Activated CD4-positive, alpha-beta memory T cell treated with anti-CD3 and anti-CD28 coated beads, Interleukin-2, amount 10 ng/mL, durations not matched to agents 7 days and 5 days (primary cell): ENCODE measurements at regions of chr4 and their contacts with region 1.

Region 1: GRCh38 chr4:152500800-152501434 is 35.0 kb downstream of the FBXW7 start:
- DNase-seq: peak; percentile 51
- H3K4me3 Mint-ChIP-seq: no peak overlapping the region
- H3K27ac Mint-ChIP-seq: no peak overlapping the region
- H3K4me1 Mint-ChIP-seq: peaks cover 25% of the 10 kb centered on the region
- H3K27me3 Mint-ChIP-seq: no peaks in the 10 kb centered on the region

Region 2: DNA sequence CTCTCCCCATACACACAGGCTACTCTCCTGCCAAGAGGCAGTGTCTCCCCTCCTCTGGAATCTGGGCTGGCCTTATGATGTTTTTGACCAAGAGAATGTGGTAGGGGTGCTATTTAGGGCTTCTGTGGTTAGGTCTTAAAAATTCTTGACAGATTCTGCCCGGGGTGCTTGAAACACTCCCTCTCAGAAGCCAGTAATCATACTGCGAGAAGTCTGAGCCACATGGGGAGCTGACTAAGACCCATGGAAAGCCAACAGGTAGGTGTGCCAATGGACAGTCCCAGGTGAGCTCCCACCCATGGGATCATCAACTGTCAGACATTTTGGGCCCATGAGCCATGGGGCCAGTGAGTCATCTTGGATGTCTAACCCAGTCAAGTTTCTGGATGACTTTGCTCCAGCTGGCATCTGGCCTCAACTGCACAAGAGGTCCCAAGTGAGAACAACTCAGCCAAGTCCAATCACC is 280.7 kb before region 1 on chr4:
- CTCF ChIA-PET with region 1: no interaction called
- POLR2A ChIA-PET with region 1: no interaction called
- DNase-seq: no peak
- H3K4me3 Mint-ChIP-seq: no peak overlapping the region
- H3K27ac Mint-ChIP-seq: no peak overlapping the region
- H3K4me1 Mint-ChIP-seq: peaks cover 19% of the 10 kb centered on the region
- H3K27me3 Mint-ChIP-seq: no peaks in the 10 kb centered on the region

Region 3: DNA sequence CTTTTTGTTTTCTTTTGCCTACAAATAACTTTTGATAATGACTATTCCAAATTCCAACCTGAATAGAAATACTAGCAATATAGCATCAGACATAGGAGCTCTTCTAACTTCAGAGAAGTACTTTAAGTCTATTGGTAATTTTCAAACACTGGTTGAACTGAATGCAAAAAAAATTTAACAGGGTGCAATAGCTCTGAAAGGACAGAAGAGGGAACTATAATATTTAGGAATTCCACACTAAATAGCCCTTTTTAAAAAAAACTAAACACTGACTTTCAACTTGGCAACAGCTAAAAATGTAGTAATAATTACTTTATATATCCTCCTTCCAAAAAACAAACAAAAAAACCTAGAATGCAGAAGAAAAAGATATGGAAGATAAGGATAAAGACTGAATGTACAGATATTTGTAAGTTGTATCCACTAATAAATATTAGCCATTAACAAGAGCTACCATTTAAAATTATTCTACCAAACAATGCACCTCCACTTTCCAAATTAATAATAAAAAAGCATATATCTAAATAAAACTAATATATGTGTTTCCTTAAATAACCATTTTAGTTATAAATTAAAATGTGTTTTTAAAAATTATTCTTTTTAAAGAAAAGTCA is 46.4 kb before region 1 on chr4:
- CTCF ChIA-PET with region 1: interaction called, 10 read pairs
- POLR2A ChIA-PET with region 1: no interaction called
- DNase-seq: no peak
- H3K4me3 Mint-ChIP-seq: no peak overlapping the region
- H3K27ac Mint-ChIP-seq: no peak overlapping the region
- H3K4me1 Mint-ChIP-seq: peaks cover 27% of the 10 kb centered on the region
- H3K27me3 Mint-ChIP-seq: no peaks in the 10 kb centered on the region

Region 4: GRCh38 chr4:152485726-152486276 is 15.1 kb before region 1 on chr4:
- CTCF ChIA-PET with region 1: interaction called, 11 read pairs
- POLR2A ChIA-PET with region 1: interaction called, 3 read pairs
- DNase-seq: peak; percentile 41
- H3K4me3 Mint-ChIP-seq: peak overlapping the region; percentile 18
- H3K27ac Mint-ChIP-seq: peak overlapping the region; percentile 81
- H3K4me1 Mint-ChIP-seq: peaks cover 41% of the 10 kb centered on the region
- H3K27me3 Mint-ChIP-seq: no peaks in the 10 kb centered on the region

Region 5: DNA sequence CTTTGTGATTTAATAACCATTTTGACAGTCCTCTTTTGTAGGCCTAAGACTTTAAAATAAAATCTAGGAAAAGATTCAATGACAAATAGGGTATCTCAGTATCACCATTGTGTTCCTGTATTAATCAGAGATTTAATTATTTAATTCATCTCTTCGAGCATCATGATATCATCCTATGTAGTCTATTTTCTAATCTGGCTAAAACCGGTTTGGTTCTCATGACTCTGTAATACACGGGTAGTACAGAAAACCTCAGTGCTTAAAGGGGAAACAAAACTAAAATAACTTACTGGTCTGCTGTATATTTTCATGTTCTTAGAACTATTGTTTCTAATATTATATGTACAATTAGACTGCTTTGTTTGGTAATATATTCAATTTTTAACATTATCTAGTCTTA is 58.7 kb after region 1 on chr4:
- CTCF ChIA-PET with region 1: interaction called, 15 read pairs
- POLR2A ChIA-PET with region 1: no interaction called
- DNase-seq: no peak
- H3K4me3 Mint-ChIP-seq: no peak overlapping the region
- H3K27ac Mint-ChIP-seq: no peak overlapping the region
- H3K4me1 Mint-ChIP-seq: peaks cover 30% of the 10 kb centered on the region
- H3K27me3 Mint-ChIP-seq: peaks cover 1% of the 10 kb centered on the region

Region 6: DNA sequence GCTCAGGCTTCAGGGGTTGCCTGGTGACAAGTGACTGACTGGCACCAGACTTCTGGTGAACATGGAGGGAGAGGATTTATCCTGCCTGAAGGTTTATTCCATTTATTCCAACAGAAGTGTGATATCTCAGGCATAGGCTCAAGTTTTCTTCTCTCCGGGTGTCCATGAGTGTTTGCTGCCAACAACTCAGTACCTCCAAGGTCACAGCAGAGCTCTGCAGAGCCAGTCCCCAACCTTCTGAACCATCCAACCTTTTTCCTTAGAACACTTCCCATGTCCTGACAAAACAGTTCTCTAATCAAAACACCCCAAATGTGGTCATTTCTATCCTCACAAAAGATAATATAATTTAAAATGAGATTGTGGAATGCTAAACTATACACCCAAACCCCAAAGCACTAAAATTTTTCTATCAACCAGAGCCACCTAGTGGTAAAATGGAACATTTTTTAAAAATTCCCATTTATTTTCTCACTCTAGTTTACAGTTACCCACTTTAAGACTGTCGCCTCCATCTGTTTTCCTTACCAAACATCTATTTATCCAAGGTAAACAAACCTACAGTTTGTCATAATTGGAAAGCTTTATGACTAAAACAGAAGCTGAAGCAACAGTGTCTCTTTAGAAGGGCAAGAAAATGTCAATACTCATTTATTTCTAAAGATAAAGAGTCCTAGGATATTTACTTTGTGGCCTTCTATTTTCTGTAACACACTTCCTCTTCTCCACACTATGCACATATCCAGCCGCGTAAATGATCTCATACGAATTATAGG is 139.3 kb after region 1 on chr4:
- CTCF ChIA-PET with region 1: interaction called, 155 read pairs
- POLR2A ChIA-PET with region 1: interaction called, 3 read pairs
- DNase-seq: no peak
- H3K4me3 Mint-ChIP-seq: no peak overlapping the region
- H3K27ac Mint-ChIP-seq: no peak overlapping the region
- H3K4me1 Mint-ChIP-seq: peaks cover 42% of the 10 kb centered on the region
- H3K27me3 Mint-ChIP-seq: no peaks in the 10 kb centered on the region

Region 7: DNA sequence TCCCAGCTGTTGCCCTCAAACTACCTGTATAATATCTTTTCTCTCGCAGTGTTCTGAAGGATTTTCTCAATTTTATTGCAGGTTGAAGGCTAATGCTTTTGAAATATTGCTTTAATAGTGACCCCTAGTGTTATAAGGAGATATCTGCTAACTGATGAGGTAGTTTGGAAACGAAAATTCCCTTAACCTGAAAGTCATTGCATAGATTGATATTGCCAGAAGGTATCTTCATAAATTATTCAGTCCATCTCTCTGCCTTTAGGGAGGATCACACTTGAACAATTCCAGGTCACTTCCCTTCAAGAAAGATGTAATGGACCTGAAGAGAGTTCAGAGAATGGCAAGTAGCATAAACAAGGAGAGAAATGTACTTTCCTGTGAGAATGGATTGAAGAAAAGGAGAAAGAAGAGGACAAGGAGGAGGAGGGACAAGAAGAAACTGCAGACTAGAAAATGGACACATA is 234.5 kb after region 1 on chr4:
- CTCF ChIA-PET with region 1: interaction called, 36 read pairs
- POLR2A ChIA-PET with region 1: interaction called, 4 read pairs
- DNase-seq: no peak
- H3K4me3 Mint-ChIP-seq: no peak overlapping the region
- H3K27ac Mint-ChIP-seq: no peak overlapping the region
- H3K4me1 Mint-ChIP-seq: peaks cover 12% of the 10 kb centered on the region
- H3K27me3 Mint-ChIP-seq: peaks cover 3% of the 10 kb centered on the region